SK-N-SH (cell line): ENCODE measurements at regions of chr11 and their contacts with region 1.

Region 1: DNA sequence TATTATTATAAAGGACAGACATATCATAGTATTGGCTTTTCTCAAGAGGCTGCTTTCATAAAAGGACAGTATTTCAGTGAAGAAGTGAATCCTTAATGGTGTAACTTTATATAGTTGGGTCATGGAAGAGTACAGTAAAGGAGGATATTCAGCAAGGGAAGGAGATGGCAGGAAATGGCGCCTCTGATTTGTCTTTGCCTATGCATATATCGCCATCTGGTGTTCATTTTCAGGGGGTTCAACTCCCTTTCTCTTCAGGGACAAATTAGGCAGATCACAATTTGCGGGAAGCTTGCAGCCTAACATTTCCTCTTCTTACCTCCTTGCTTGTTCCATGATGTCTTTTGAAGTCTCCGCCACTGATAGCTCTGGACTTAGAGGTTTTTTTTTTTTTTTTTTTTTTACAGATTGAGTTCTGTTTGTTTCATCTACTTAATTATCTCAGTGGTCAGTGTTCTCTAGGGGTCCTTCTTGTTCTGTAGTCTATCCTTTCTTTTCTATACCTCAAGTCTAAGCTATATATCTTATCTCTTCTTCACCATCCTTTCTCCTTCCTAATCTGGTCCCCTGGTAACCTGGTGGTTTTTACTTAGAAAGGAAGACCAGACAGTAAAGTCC is 21.8 kb upstream of the RRM1 start:
- DNase-seq: peak; percentile 70
- H3K4me3 ChIP-seq: no peak overlapping the region; a peak in 1 of 4 replicates
- H3K27ac ChIP-seq: peak overlapping the region in 1 of 2 experiments; percentile 72; a peak in 2 of 4 replicates
- H3K4me1 ChIP-seq: peaks cover 0 to 12% of the 10 kb centered on the region in 2 experiments; a peak in 2 of 4 replicates
- H3K27me3 ChIP-seq: no peaks in the 10 kb centered on the region
- CTCF ChIP-seq: peak; percentile 88
- EP300 ChIP-seq: no peak
- RAD21 ChIP-seq: peak; percentile 99

Region 2: DNA sequence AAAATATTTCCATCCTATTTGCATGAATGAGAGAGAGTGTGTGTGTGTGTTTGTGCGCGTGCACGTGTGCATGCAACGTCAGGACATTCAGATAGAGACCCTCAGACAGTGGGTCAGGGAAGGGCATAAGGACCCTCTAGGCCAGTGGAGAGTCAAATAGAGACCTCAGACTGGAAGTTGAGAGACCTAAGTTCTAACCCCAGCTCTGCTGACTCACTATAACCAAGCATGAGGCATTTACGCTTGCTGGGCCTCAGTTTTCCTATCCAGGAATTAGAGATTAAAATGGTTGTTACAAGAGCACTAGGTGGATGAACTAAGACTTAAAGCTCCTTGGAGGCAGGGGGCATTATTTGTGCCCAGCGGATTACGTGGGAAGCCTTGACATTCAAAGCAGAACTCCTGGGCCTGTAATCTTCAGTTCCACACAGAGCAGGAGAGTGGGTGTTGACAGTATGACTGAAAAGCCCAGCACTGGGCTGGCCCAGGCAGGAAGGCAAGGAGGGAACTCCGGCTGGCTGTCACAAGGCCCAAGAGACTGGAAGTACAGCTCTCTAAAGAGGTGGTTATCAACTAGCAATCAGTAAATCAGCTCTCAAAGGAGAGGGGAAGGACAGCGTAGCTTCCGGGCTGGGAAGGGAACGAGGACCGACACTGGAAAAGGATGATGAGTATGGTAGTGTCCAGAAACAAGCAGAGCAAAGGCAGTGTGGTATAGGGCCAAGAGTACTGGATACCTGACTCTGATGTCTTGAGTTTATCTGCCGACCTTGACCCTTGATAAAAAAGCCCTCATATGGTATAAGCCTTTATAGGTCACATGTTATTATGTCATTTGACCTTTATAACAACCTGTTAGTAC is 241.2 kb before region 1 on chr11:
- CTCF ChIA-PET with region 1: interaction called, 17 read pairs
- POLR2A ChIA-PET with region 1: no interaction called
- DNase-seq: no peak
- H3K4me3 ChIP-seq: no peak overlapping the region
- H3K27ac ChIP-seq: no peak overlapping the region
- H3K4me1 ChIP-seq: peaks cover 0 to 3% of the 10 kb centered on the region in 2 experiments; a peak in 1 of 4 replicates
- H3K27me3 ChIP-seq: no peaks in the 10 kb centered on the region
- CTCF ChIP-seq: no peak
- EP300 ChIP-seq: no peak
- RAD21 ChIP-seq: no peak

Region 3: DNA sequence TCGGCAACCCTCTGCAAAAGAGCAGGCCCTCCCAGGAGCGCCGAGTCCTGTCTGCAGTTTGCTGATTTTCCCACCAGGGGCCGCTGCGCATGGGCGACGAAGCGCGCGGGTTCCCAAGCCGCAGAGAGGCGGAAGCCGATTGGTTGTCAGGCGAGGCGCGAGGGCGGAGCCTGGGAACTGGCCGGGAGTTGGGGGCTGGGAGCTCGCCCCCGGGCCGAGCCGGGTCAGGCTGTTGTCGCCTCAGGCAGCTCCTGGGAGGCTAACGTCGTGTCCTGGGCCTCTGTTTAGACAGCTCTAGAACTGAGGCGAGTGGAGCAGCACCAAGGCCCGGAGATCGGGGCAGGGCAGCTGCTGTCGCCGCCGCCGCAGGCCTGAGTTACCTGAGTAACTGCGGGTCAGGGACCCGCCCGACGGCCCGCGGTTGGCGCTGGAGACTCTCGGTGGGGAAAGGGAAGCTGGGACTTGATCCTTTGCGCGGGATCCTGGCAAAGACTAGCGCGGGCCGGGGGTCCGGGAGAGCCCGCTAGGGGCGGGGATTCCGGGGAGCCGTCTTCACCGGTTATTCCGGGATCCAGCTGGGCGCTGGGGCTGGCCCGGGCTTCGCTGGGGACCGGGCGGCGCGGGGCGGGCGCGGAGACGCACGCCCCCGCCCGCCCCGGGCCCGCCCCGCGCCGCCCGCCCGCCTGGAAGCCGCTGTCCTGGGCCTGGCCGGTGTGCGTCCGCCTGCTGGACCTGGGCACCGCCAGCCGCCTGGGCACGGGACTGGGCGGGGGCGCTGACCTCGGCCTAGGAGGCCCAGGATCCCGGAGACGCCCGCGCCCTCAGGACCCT is 217.6 kb before region 1 on chr11 and contains the start of gene STIM1:
- CTCF ChIA-PET with region 1: interaction called, 636 read pairs
- POLR2A ChIA-PET with region 1: interaction called, 7 read pairs
- DNase-seq: peak; percentile 95
- H3K4me3 ChIP-seq: peak within 1 kb of the TSS; percentile 87 to 89
- H3K27ac ChIP-seq: peak within 1 kb of the TSS; percentile 82 to 88
- H3K4me1 ChIP-seq: peaks cover 27 to 28% of the 10 kb centered on the region in 2 experiments; a peak in 3 of 4 replicates
- H3K27me3 ChIP-seq: no peaks in the 10 kb centered on the region
- CTCF ChIP-seq: peak; percentile 83
- EP300 ChIP-seq: peak; percentile 19 to 25; a peak in 2 of 4 replicates
- RAD21 ChIP-seq: peak; percentile 85
- polyA plus RNA-seq, gene STIM1: 21.8 and 29.5 TPM in 2 replicates

Region 4: DNA sequence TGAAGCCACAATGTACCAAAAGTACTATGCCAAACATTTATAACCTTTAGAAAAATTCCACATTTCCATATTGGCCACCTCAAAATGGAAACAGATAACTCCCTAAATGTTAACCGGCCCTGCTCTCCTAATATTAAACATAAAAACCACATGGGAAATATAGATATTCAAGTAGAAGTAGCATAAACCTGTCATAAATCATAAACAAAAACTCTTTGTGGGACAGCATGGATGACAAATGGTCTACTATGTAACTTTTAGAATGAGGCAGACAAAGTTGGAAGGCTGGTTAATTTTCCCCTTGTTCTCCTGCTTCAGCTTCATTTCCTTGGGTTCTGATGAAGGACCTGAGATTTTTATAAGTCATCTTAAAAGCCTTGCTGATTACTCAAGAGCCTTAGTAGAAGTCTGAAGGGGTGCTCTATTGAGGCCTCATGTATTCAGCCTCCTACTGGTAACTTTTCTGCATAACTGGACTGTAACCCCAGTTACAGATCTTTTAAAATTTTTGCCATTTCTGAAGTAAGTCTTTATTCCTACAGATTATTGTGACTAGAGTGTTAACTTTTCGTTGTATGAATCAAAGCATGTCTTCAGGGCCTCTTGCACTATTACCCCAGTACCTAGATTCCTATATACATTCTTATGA is 100.9 kb before region 1 on chr11:
- CTCF ChIA-PET with region 1: interaction called, 12 read pairs
- POLR2A ChIA-PET with region 1: no interaction called
- DNase-seq: no peak
- H3K4me3 ChIP-seq: no peak overlapping the region
- H3K27ac ChIP-seq: no peak overlapping the region
- H3K4me1 ChIP-seq: no peaks in the 10 kb centered on the region
- H3K27me3 ChIP-seq: no peaks in the 10 kb centered on the region
- CTCF ChIP-seq: peak; percentile 14; the same call in 1 of the 2 replicates
- EP300 ChIP-seq: no peak
- RAD21 ChIP-seq: no peak

Region 5: GRCh38 chr11:4025248-4025966 is 47.4 kb before region 1 on chr11:
- CTCF ChIA-PET with region 1: interaction called, 25 read pairs
- POLR2A ChIA-PET with region 1: no interaction called
- DNase-seq: peak; percentile 44
- H3K4me3 ChIP-seq: no peak overlapping the region
- H3K27ac ChIP-seq: peak overlapping the region; percentile 73 to 93
- H3K4me1 ChIP-seq: peaks cover 15 to 18% of the 10 kb centered on the region in 2 experiments; a peak in 3 of 4 replicates
- H3K27me3 ChIP-seq: no peaks in the 10 kb centered on the region
- CTCF ChIP-seq: no peak
- EP300 ChIP-seq: peak in 1 of 2 experiments; percentile 33; a peak in 1 of 4 replicates
- RAD21 ChIP-seq: peak; percentile 22; the same call in 1 of the 2 replicates

Region 6: DNA sequence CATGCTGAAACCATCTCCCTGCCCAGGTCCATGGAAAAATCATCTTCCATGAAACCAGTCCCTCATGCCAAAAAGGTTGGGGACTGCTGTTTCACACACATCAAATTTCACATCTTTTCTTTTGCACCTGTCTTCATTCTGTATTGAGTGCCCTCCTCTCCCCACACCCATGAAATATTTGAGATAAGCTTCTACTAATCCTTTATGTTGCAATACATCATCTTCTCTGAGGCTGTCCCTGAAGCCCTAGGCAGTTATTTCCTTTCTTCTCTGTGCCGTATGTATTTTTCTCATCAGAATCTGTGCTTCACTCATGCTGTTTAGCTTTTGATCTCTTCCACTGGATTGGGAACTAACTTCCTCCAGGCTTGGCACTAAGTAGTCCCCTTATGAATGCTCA is 18.1 kb before region 1 on chr11:
- CTCF ChIA-PET with region 1: interaction called, 27 read pairs
- POLR2A ChIA-PET with region 1: no interaction called
- DNase-seq: no peak
- H3K4me3 ChIP-seq: no peak overlapping the region
- H3K27ac ChIP-seq: no peak overlapping the region
- H3K4me1 ChIP-seq: peaks cover 0 to 6% of the 10 kb centered on the region in 2 experiments; a peak in 2 of 4 replicates
- H3K27me3 ChIP-seq: no peaks in the 10 kb centered on the region
- CTCF ChIP-seq: no peak
- EP300 ChIP-seq: no peak
- RAD21 ChIP-seq: no peak